Activated CD4-positive, alpha-beta T cell treated with anti-CD3 and anti-CD28 coated beads, Interleukin-2, amount 10 ng/mL, durations not matched to agents 24 days and 14 days (primary cell): ENCODE measurements at regions of chr12 and their contacts with region 1.

Region 1: GRCh38 chr12:9244894-9245293 is 36.7 kb upstream of the PZP start:
- DNase-seq: peak; percentile 66
- H3K4me3 Mint-ChIP-seq: peak overlapping the region; percentile 15
- H3K27ac Mint-ChIP-seq: peak overlapping the region; percentile 96
- H3K4me1 Mint-ChIP-seq: peaks cover 29% of the 10 kb centered on the region
- H3K27me3 Mint-ChIP-seq: peaks cover 16% of the 10 kb centered on the region

Region 2: GRCh38 chr12:8644345-8645248 is 600.3 kb before region 1 on chr12:
- intact Hi-C with region 1: loop called (anchors 10 kb)
- DNase-seq: peak; percentile 89
- H3K4me3 Mint-ChIP-seq: peak overlapping the region; percentile 72
- H3K27ac Mint-ChIP-seq: peak overlapping the region; percentile 77
- H3K4me1 Mint-ChIP-seq: peaks cover 41% of the 10 kb centered on the region
- H3K27me3 Mint-ChIP-seq: peaks cover 43% of the 10 kb centered on the region

Region 3: DNA sequence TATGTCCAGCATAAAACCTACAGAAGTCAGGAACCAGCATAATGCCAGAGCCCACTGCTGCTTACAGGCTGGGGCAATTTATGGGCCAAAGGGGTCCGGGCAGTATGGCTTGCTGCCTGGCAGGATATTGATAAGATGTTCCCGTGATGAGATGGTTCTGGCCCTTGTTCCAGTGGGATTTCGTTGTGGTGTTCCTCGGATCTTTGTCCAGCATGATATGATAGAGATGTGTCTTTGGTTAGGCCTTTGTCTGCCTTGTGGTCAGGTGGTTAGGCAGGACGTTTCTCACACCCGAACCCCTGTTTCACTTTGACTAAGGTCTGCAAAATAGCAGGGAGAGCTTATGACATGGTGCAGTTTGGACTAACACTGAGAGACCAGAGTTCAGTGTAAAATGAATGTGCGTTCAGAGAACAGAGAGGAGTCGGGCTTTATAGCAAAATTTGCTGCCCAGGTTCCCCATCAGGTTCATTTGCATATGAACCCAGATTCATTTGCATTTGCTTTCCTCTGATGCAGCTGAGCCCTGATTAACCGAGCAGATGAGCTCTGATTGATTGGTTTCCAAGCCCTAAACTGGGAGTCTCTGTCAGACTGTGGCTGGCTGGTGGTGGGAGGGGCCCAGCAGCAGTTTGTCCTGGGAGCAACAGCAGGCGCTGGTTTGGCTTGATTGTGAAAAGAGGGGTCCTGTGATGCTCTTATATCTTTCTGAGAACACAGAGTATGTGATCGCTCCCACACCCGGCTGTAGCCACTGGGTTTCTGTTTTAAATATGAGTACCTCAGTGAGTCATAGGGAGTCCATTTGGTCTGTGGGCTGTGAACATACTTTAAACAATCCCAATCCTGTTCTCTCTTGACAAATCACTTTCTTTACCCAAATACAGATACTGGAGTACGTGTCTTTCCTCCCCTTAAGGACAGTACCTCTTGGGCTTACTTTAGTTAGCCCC is 119.6 kb after region 1 on chr12:
- intact Hi-C with region 1: loop called (anchors 1 kb)
- DNase-seq: peak; percentile 81
- H3K4me3 Mint-ChIP-seq: peak overlapping the region; percentile 66
- H3K27ac Mint-ChIP-seq: peak overlapping the region; percentile 88
- H3K4me1 Mint-ChIP-seq: peaks cover 40% of the 10 kb centered on the region
- H3K27me3 Mint-ChIP-seq: peaks cover 33% of the 10 kb centered on the region

Region 4: DNA sequence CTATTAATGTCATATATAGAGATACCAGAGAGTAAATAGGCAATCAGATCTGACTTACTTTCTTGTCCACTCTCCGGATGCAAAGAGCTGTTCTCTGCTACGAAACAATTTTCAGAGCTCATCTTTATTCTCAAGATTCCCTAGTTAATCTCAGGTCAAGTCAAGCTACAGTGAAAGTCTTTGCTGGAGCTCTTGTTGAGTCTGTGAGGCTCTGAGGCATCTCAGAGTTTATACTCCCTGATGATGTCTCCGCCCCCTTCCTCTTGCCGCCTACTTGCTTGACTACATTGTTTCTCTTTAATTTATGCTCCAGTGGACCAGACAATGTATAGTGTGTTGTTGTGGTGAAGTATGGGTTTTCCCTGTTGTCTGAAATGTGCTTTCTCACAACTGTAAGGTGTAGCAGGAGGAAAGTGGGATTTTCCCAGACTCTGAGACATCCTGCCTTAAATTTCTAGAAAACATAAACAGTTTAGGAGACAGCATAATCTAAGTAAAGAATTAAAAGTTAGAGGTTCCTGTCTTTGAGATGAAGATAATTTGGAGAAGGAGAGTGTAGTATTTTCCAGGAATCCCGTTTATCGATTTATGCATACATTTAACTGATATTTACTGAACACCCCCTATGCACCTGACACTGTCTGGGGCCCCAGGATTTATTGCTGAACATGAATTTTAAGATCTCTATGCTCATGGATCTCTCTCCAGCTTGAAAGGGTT is 516.0 kb after region 1 on chr12 and contains the start of gene CD69:
- intact Hi-C with region 1: loop called (anchors 1 kb)
- DNase-seq: peak; percentile 96
- H3K4me3 Mint-ChIP-seq: peak within 1 kb of the TSS; percentile 94
- H3K27ac Mint-ChIP-seq: peak within 1 kb of the TSS; percentile 98
- H3K4me1 Mint-ChIP-seq: peaks cover 48% of the 10 kb centered on the region
- H3K27me3 Mint-ChIP-seq: peaks cover 5% of the 10 kb centered on the region
- total RNA-seq, gene CD69: 106 and 111 TPM in 2 replicates